Activated T-helper 2 cell treated with anti-CD3 and anti-CD28 coated beads, Interferon-gamma antibody, Interleukin-2, Interleukin-4, amounts not matched to agents 10 μg/mL and 5 μg/mL and 100 μg/mL, durations not matched to agents 14 hours and 24 hours and 36 hours (primary cell): ENCODE measurements at regions of chr2 and their contacts with region 1.

Region 1: GRCh38 chr2:111091811-111092211 is 28.9 kb upstream of the BCL2L11 start:
- DNase-seq: no peak
- H3K4me3 Mint-ChIP-seq: no peak overlapping the region
- H3K27ac Mint-ChIP-seq: peak overlapping the region; percentile 19
- H3K4me1 Mint-ChIP-seq: peaks cover 18% of the 10 kb centered on the region
- H3K27me3 Mint-ChIP-seq: peaks cover 60% of the 10 kb centered on the region

Region 2: GRCh38 chr2:110847651-110848050 is 244.2 kb before region 1 on chr2:
- intact Hi-C with region 1: loop called (anchors 2 kb)
- DNase-seq: no peak
- H3K4me3 Mint-ChIP-seq: no peak overlapping the region
- H3K27ac Mint-ChIP-seq: peak overlapping the region; percentile 99
- H3K4me1 Mint-ChIP-seq: peaks cover 82% of the 10 kb centered on the region
- H3K27me3 Mint-ChIP-seq: peaks cover 3% of the 10 kb centered on the region

Region 3: GRCh38 chr2:111049792-111050640 is 41.8 kb before region 1 on chr2:
- intact Hi-C with region 1: loop called (anchors 2 kb)
- DNase-seq: no peak
- H3K4me3 Mint-ChIP-seq: peak overlapping the region; percentile 22
- H3K27ac Mint-ChIP-seq: peak overlapping the region; percentile 39
- H3K4me1 Mint-ChIP-seq: peaks cover 47% of the 10 kb centered on the region
- H3K27me3 Mint-ChIP-seq: peaks cover 15% of the 10 kb centered on the region

Region 4: GRCh38 chr2:111111101-111111755 is 19.4 kb after region 1 on chr2:
- intact Hi-C with region 1: loop called (anchors 1 kb)
- DNase-seq: no peak
- H3K4me3 Mint-ChIP-seq: no peak overlapping the region
- H3K27ac Mint-ChIP-seq: no peak overlapping the region
- H3K4me1 Mint-ChIP-seq: peaks cover 21% of the 10 kb centered on the region
- H3K27me3 Mint-ChIP-seq: peaks cover 51% of the 10 kb centered on the region